Posterior cingulate gyrus (tissue), 11 donors: ENCODE measurements at regions of chr2 and their contacts with region 1.

Region 1: GRCh38 chr2:235639428-235639773 is 145.6 kb downstream of the AGAP1 start:
- DNase-seq: peak; percentile 71 to 97 (median 86)

Region 2: GRCh38 chr2:235579128-235579527 is 60.3 kb before region 1 on chr2:
- intact Hi-C with region 1: no loop called
- DNase-seq: peak in 1 of 10 donors; percentile 22

Region 3: GRCh38 chr2:235614900-235615712 is 24.3 kb before region 1 on chr2:
- intact Hi-C with region 1: loop called (anchors 2 kb)
- DNase-seq: peak; percentile 71 to 97 (median 83)

Region 4: GRCh38 chr2:235669983-235670962 is 30.9 kb after region 1 on chr2:
- intact Hi-C with region 1: loop called (anchors 2 kb)
- DNase-seq: peak; percentile 49 to 96 (median 70)

Region 5: DNA sequence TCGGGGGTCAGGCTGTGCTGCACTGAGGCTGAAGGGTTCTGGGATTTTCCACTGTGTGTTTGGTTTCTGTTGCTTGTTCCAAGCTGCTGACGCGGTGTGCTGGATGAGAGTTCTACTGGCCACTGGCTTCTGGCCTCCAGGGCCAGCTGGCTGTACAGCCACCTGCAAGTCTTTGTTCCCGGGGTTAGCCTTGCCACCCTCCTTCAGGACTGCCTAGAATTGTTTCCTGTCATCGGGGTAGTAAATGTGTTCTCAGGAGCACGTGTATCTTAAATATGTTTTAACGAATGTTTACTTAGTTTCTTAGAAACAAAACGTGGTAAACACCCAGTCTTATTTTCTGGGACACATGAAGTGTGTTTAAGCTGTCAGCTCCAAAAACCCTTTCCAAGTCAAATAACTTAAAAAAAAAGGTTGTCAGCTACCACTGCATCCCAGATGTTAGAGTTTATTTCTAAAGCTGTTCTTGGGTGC is 85.7 kb after region 1 on chr2:
- intact Hi-C with region 1: no loop called
- DNase-seq: peak in 4 of 10 donors; percentile 56 to 92 (median 65)